ENCODE measurements at regions of chr4 and their contacts with region 1.

Region 1: DNA sequence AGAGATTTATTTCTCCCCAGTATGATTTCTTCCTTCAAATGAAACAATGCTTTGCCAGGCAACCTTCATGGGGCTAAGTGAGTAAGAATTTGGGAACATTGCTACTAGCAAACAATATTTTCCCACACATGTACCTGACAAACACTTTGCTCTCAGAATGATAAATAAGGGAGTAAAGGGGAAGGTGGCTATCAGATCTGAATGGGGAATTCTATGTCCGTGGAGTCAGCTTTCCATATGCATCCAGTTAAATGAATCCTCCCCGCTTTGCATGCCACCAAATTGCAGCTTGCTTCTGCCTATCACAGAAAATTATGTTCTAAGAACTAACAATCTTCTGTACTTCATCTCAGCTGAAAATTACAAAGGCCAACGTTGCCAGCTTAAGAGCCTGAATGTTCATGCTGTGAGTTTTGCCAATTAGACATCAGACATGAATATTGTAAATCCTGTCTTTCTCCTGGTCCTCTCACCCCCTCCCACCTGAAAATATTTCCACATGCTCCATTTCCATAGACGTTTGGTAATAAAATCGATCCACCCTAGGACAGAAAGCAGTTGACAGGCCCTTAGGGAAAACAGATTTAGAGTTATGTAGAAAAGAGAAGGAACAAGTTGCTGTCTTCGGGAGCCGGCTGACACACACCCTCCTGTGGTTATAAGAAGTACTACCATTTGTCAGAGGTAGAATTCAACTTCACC is 6.3 kb downstream of the MEPE start:
- DNase-seq: peak; percentile 49
- ATAC-seq: peak; percentile 82
- H3K4me3 ChIP-seq: no peak overlapping the region
- H3K27ac ChIP-seq: no peak overlapping the region
- H3K4me1 ChIP-seq: no peaks in the 10 kb centered on the region
- H3K27me3 ChIP-seq: peaks cover 5% of the 10 kb centered on the region
- CTCF ChIP-seq: peak; percentile 68
- POLR2A ChIP-seq: no peak
- RAD21 ChIP-seq: peak; percentile 75

Region 2: GRCh38 chr4:87270144-87270543 is 568.9 kb before region 1 on chr4:
- CTCF ChIA-PET with region 1: no interaction called
- POLR2A ChIA-PET with region 1: no interaction called
- dilution Hi-C with region 1: no loop called
- in situ Hi-C with region 1: no loop called
- intact Hi-C with region 1: loop called (anchors 2 kb)
- DNase-seq: peak; percentile 52
- ATAC-seq: peak; percentile 87
- H3K4me3 ChIP-seq: no peak overlapping the region
- H3K27ac ChIP-seq: no peak overlapping the region
- H3K4me1 ChIP-seq: no peaks in the 10 kb centered on the region
- H3K27me3 ChIP-seq: peaks cover 11% of the 10 kb centered on the region
- CTCF ChIP-seq: peak; percentile 64
- POLR2A ChIP-seq: no peak
- RAD21 ChIP-seq: peak; percentile 65

Region 3: DNA sequence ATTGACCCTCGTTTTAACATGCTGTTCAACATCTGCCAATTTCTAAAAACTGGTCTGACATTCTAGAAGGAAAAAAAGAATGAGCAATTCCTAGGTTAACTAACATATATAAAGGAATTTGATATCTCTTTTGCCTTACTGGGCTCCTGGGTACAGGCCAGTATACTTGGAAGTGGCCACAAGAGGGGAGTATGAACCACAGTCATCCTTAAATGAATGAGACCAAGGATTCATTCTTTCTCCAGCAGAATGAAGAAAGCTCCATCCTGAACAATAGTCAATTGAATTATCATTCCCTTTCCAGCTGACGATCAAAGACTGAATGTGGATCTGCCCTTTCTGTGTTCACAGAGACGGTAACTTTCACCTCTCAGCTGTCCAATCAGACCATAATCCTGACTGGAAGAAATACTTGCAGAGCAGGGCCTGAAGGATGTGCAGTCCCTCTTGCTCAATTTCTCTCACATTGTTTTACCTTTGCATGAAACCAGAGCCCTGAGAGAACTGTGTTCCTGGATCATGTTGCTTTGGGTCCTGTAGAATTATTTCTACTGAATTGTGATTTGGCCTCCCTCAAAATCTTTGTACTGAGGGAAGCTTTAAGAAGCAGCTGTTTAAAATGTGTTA is 295.1 kb before region 1 on chr4:
- CTCF ChIA-PET with region 1: no interaction called
- POLR2A ChIA-PET with region 1: no interaction called
- dilution Hi-C with region 1: no loop called
- in situ Hi-C with region 1: loop called (anchors 10 kb)
- intact Hi-C with region 1: loop called (anchors 5 kb)
- DNase-seq: peak; percentile 52
- ATAC-seq: peak; percentile 90
- H3K4me3 ChIP-seq: no peak overlapping the region
- H3K27ac ChIP-seq: no peak overlapping the region
- H3K4me1 ChIP-seq: no peaks in the 10 kb centered on the region
- H3K27me3 ChIP-seq: peaks cover 7% of the 10 kb centered on the region
- CTCF ChIP-seq: peak; percentile 50
- POLR2A ChIP-seq: no peak
- RAD21 ChIP-seq: peak; percentile 46